Activated CD4-positive, alpha-beta T cell treated with anti-CD3 and anti-CD28 coated beads for 36 hours (primary cell): ENCODE measurements at regions of chr15 and their contacts with region 1.

Region 1: GRCh38 chr15:84874981-84875699 is 9.3 kb upstream of the SLC28A1 start:
- DNase-seq: no peak
- ATAC-seq: no peak
- H3K4me3 Mint-ChIP-seq: no peak overlapping the region
- H3K27ac Mint-ChIP-seq: no peak overlapping the region
- H3K4me1 Mint-ChIP-seq: no peaks in the 10 kb centered on the region
- H3K27me3 Mint-ChIP-seq: no peaks in the 10 kb centered on the region

Region 2: DNA sequence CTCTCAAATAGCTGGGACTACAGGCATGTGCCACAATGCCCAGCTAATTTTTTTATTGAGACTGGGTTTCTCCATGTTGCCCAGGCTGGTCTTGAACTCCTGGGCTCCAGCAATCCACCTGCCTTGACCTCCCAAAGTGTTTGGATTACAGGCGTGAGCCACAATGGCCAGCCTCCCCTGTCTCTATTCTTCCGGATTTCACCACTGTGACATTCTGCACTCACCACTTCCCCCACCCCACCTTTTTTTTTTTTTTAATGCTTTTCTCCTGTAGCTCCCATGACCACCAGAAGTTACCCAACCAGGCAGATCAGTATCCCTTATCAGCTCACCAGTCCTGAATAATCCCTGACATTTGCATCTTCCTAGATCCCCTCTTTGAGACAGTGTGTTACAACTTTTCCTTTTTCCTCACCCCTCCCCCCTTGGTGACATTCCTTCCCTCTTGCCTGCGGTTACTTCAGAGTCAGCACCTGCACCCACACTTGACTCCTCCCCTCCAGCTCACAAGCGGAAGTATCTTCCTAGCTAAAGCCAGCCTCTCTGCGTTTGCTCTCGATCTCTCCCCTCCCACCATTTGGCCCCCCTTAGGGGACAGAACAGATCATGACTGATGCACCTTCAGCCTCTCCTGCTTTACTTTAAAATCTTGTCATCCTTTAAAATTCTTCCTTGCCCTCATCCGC is 140.2 kb before region 1 on chr15:
- CTCF ChIA-PET with region 1: no interaction called
- POLR2A ChIA-PET with region 1: no interaction called
- intact Hi-C with region 1: no loop called
- DNase-seq: peak; percentile 87
- ATAC-seq: peak; percentile 72
- H3K4me3 Mint-ChIP-seq: peak overlapping the region; percentile 59
- H3K27ac Mint-ChIP-seq: peak overlapping the region; percentile 97
- H3K4me1 Mint-ChIP-seq: peaks cover 63% of the 10 kb centered on the region
- H3K27me3 Mint-ChIP-seq: no peaks in the 10 kb centered on the region

Region 3: GRCh38 chr15:84826369-84826823 is 48.7 kb before region 1 on chr15:
- CTCF ChIA-PET with region 1: no interaction called
- POLR2A ChIA-PET with region 1: no interaction called
- intact Hi-C with region 1: loop called in 1 of 2 experiments (anchors 2 kb)
- DNase-seq: peak; percentile 59
- ATAC-seq: peak; percentile 44
- H3K4me3 Mint-ChIP-seq: no peak overlapping the region
- H3K27ac Mint-ChIP-seq: no peak overlapping the region
- H3K4me1 Mint-ChIP-seq: no peaks in the 10 kb centered on the region
- H3K27me3 Mint-ChIP-seq: no peaks in the 10 kb centered on the region

Region 4: DNA sequence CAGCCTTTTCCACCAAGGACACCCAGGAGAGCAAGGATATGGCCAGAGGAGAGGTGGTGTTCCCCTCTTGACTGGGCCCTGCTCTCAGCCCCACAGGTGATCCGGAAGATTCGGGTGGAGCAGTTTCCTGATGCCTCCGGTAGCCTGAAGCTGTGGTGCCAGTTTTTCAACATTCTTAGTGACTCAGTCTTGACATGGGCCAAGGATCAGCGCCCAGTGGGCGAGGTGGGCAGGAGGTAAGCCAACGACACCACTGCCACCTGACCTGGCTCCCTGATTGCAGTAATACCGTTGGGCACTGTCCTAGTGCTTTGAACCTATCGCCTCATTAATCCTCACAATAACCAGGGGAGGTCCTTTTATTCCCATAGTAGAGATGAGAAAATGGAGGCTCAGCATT is 16.0 kb before region 1 on chr15:
- CTCF ChIA-PET with region 1: no interaction called
- POLR2A ChIA-PET with region 1: no interaction called
- intact Hi-C with region 1: no loop called
- DNase-seq: no peak
- ATAC-seq: no peak
- H3K4me3 Mint-ChIP-seq: no peak overlapping the region
- H3K27ac Mint-ChIP-seq: no peak overlapping the region
- H3K4me1 Mint-ChIP-seq: no peaks in the 10 kb centered on the region
- H3K27me3 Mint-ChIP-seq: no peaks in the 10 kb centered on the region

Region 5: DNA sequence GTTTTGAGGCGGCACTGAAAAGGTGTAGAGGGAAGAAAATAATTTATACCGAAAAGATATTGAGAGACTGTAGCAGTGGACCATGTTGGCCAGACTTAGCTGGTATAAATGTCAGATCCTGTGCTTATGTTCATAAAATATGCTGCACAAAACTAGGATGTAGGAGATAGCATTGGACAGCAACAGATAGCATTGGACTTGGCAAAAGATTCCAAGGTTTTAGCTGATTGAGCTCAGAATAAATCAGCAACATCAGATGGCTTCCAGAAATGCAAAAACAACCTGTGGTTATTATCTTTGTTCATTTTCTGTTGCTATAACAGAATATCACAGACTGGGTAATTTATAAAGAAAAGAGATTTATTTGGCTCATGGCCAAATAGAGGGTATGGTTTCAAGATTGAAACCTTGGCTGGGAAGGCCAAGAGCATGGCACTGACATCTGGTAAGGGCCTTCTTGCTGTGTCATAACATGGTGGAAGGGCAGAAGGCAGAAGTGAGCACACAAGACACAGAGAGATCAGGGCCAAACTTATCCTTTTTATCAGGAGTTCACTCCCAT is 44.0 kb after region 1 on chr15:
- CTCF ChIA-PET with region 1: no interaction called
- POLR2A ChIA-PET with region 1: no interaction called
- intact Hi-C with region 1: no loop called
- DNase-seq: no peak
- ATAC-seq: no peak
- H3K4me3 Mint-ChIP-seq: no peak overlapping the region
- H3K27ac Mint-ChIP-seq: no peak overlapping the region
- H3K4me1 Mint-ChIP-seq: peaks cover 11% of the 10 kb centered on the region
- H3K27me3 Mint-ChIP-seq: peaks cover 2% of the 10 kb centered on the region

Region 6: DNA sequence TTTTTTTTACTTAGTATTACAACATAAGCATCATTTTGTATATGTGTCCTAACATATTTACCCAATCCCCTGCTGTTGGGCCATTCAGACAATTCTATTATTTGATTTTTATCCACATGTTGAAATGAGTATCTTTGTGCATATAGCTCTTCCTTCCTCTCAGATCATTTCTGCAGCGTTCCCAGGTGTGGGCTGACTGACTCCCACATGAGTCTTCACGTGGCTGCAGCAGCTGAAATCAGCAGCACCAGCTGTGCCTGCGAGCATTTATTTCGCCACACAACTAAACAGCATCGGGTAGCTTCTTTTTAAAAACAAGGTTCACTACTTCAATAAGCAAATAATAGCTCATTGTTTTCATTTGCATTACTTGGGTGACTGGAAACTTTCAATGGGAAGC is 62.0 kb after region 1 on chr15:
- CTCF ChIA-PET with region 1: no interaction called
- POLR2A ChIA-PET with region 1: interaction called, 11 read pairs
- intact Hi-C with region 1: no loop called
- DNase-seq: no peak
- ATAC-seq: no peak
- H3K4me3 Mint-ChIP-seq: no peak overlapping the region
- H3K27ac Mint-ChIP-seq: no peak overlapping the region
- H3K4me1 Mint-ChIP-seq: no peaks in the 10 kb centered on the region
- H3K27me3 Mint-ChIP-seq: no peaks in the 10 kb centered on the region

Region 7: DNA sequence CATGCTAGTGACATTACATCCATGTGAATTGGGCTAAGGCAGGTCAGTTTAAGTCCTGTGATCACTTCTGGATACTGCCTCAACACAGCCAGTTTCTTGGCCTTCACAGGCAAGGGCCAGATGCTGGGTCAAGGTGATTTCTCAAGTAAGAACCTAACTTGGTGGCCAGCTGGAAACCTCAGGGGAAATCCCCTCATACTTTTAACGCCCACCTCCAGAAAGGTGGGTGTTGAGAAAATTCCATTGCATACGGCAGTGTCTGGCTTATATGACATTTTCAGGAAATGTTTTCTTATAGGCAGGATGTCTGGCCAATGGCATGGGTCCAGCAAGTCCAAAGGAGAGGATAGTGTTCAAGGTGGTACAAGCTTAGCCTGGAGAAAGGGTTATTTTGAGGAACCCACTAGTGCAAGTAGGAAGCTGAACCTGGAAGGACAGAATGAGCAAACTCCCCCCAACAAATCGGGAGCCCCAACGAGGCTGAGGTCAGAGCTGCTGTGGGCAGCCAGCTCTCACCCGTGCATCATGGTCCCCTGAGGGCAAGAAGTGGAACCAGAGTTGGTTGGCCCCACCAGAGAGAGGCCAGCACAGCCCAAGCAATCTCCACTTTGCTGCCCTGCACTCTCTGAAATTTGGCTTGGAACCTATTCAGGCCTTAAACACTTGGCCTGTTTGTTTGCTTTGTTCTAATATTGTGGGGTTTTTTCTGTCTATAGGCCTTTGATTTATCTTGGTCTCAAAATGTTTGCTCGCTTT is 242.0 kb after region 1 on chr15:
- CTCF ChIA-PET with region 1: no interaction called
- POLR2A ChIA-PET with region 1: no interaction called
- intact Hi-C with region 1: no loop called
- DNase-seq: no peak
- ATAC-seq: no peak
- H3K4me3 Mint-ChIP-seq: no peak overlapping the region
- H3K27ac Mint-ChIP-seq: peak overlapping the region; percentile 53
- H3K4me1 Mint-ChIP-seq: peaks cover 10% of the 10 kb centered on the region
- H3K27me3 Mint-ChIP-seq: no peaks in the 10 kb centered on the region